ENCODE measurements at regions of chr11 and their contacts with region 1.

Region 1: GRCh38 chr11:19769820-19770219 is 57.2 kb downstream of the NAV2 start:
- DNase-seq: peak; percentile 66
- ATAC-seq: peak; percentile 82
- H3K4me3 ChIP-seq: no peak overlapping the region
- H3K27ac ChIP-seq: no peak overlapping the region
- H3K4me1 ChIP-seq: peaks cover 4% of the 10 kb centered on the region
- H3K27me3 ChIP-seq: peaks cover 8% of the 10 kb centered on the region; the same call in 1 of the 2 replicates
- CTCF ChIP-seq: no peak
- POLR2A ChIP-seq: no peak
- RAD21 ChIP-seq: no peak

Region 2: GRCh38 chr11:19076744-19077589 is 692.9 kb before region 1 on chr11:
- CTCF ChIA-PET with region 1: no interaction called
- POLR2A ChIA-PET with region 1: no interaction called
- dilution Hi-C with region 1: no loop called
- in situ Hi-C with region 1: loop called (anchors 25 kb)
- intact Hi-C with region 1: no loop called
- DNase-seq: peak; percentile 19
- ATAC-seq: peak; percentile 92
- H3K4me3 ChIP-seq: no peak overlapping the region
- H3K27ac ChIP-seq: no peak overlapping the region
- H3K4me1 ChIP-seq: peaks cover 3% of the 10 kb centered on the region; the same call in 1 of the 2 replicates
- H3K27me3 ChIP-seq: peaks cover 16% of the 10 kb centered on the region
- CTCF ChIP-seq: peak; percentile 79
- POLR2A ChIP-seq: no peak
- RAD21 ChIP-seq: peak; percentile 48

Region 3: DNA sequence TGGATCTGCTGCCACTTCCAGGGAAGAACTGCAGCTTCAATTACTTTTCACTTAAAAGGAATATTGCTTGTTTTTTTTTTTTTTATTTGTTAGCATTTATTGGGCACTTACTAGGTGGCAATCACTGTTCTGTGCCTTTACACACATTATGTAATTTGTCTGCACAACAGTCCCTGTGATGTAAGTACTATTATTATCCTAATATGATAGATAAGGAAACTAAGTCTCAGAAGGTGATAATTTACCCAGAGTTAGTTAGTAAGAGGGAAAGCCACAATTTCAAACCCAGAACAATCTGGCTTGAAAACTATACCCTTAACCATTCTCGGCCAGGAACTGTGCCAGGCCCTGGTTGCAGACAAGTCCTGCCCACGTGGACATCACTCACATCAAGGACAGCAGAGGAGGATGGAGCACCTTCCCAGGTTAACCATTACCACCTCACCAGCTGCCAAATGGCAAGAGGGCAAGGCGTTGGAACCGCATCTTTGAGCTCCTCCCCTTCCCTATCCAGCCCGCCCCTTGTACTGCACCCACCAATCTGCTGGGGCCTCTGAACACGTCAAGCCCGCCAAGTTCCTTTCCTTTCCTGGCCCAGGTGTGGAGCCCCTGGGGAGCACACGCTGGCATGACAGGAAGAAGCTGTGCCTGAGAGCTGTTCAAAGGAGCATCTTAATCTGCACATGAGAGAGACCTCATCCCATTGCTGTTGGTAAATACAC is 21.2 kb after region 1 on chr11:
- CTCF ChIA-PET with region 1: no interaction called
- POLR2A ChIA-PET with region 1: interaction called, 13 read pairs
- dilution Hi-C with region 1: no loop called
- in situ Hi-C with region 1: no loop called
- intact Hi-C with region 1: no loop called
- DNase-seq: no peak
- ATAC-seq: no peak
- H3K4me3 ChIP-seq: no peak overlapping the region
- H3K27ac ChIP-seq: no peak overlapping the region
- H3K4me1 ChIP-seq: 0 out of 2 replicates have a peak, but pooled peaks cover 1% of the 10 kb centered on the region
- H3K27me3 ChIP-seq: no peaks in the 10 kb centered on the region
- CTCF ChIP-seq: no peak
- POLR2A ChIP-seq: no peak
- RAD21 ChIP-seq: no peak

Region 4: GRCh38 chr11:19814421-19814820 is 44.6 kb after region 1 on chr11:
- CTCF ChIA-PET with region 1: no interaction called
- POLR2A ChIA-PET with region 1: no interaction called
- dilution Hi-C with region 1: no loop called
- in situ Hi-C with region 1: no loop called
- intact Hi-C with region 1: no loop called
- DNase-seq: no peak
- ATAC-seq: no peak
- H3K4me3 ChIP-seq: no peak overlapping the region
- H3K27ac ChIP-seq: no peak overlapping the region
- H3K4me1 ChIP-seq: peaks cover 2% of the 10 kb centered on the region; the same call in 1 of the 2 replicates
- H3K27me3 ChIP-seq: no peaks in the 10 kb centered on the region
- CTCF ChIP-seq: no peak
- POLR2A ChIP-seq: no peak
- RAD21 ChIP-seq: no peak